ENCODE measurements at regions of chr22 and their contacts with region 1.

Region 1: DNA sequence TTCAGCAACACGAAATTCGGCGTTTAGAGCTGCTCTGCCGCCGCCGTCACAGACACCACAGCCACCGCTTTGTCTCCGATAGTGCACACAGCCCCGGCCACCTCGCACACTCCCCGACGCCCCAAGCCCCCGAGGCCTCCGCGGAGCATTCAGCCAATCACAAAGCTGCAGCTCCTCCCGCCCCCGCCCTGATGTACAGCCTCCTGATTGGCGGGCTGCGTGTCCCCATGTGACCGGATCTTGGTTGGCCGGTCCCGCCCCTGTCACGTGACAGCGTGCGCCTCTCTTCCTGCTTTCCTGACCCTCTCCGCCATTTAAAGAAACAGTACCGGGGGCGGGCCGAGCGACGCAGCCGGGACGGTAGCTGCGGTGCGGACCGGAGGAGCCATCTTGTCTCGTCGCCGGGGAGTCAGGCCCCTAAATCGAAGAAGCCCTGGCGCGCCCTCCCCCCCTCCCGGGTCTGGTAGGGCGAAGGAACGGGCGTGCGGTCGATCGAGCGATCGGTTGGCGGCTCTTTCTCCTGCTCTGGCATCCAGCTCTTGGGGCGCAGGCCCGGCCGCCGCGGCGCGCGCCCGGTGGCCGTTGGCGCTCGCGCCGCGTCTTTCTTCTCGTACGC is at the start of gene TUG1:
- DNase-seq: peak; percentile 99
- ATAC-seq: peak; percentile 93
- H3K4me3 Mint-ChIP-seq: peak within 1 kb of the TSS; percentile 86
- H3K27ac Mint-ChIP-seq: peak within 1 kb of the TSS; percentile 97
- H3K4me1 Mint-ChIP-seq: peaks cover 54% of the 10 kb centered on the region
- H3K27me3 Mint-ChIP-seq: no peaks in the 10 kb centered on the region
- CTCF ChIP-seq: no peak
- total RNA-seq, gene TUG1: 45.2 to 45.7 TPM

Region 2: GRCh38 chr22:30880181-30880601 is 88.8 kb before region 1 on chr22:
- CTCF ChIA-PET with region 1: no interaction called
- POLR2A ChIA-PET with region 1: no interaction called
- intact Hi-C with region 1: no loop called
- DNase-seq: no peak
- ATAC-seq: no peak
- H3K4me3 Mint-ChIP-seq: no peak overlapping the region
- H3K27ac Mint-ChIP-seq: no peak overlapping the region
- H3K4me1 Mint-ChIP-seq: no peaks in the 10 kb centered on the region
- H3K27me3 Mint-ChIP-seq: no peaks in the 10 kb centered on the region
- CTCF ChIP-seq: no peak

Region 3: GRCh38 chr22:30940685-30941362 is 28.2 kb before region 1 on chr22:
- CTCF ChIA-PET with region 1: interaction called, 5 read pairs
- POLR2A ChIA-PET with region 1: interaction called, 14 read pairs
- intact Hi-C with region 1: no loop called
- DNase-seq: peak; percentile 71
- ATAC-seq: peak; percentile 70
- H3K4me3 Mint-ChIP-seq: peak overlapping the region; percentile 35
- H3K27ac Mint-ChIP-seq: peak overlapping the region; percentile 81
- H3K4me1 Mint-ChIP-seq: peaks cover 67% of the 10 kb centered on the region
- H3K27me3 Mint-ChIP-seq: no peaks in the 10 kb centered on the region
- CTCF ChIP-seq: no peak

Region 4: DNA sequence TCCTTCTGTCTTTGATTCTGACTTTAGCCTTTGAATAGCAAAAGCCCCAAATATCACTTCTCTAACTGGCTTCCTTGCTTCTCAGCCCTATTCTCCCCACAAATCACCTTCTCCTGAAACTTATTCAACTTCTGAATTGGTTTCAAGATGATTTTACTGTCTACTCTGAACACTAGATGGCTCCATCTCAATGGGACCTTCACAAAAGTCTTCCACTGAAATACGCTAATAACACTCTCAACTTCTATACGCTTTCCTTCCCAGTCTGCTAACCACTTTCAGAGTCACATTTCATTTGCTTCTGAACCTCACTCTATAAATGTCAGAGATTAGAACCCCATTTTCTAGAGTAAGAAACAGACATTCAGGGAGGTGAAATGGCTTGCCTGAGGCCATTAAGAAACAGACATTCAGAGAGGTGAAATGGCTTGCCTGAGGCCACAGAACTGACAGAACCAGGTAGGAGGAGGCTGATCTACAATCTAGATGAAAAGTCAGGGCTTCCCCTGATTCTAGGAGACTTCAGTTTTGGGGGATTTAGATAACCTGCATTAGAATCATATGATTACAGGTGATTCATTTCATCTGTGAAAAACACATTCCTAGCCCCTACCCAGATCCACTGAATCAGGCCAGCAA is 21.1 kb before region 1 on chr22:
- CTCF ChIA-PET with region 1: interaction called, 11 read pairs
- POLR2A ChIA-PET with region 1: interaction called, 4 read pairs
- intact Hi-C with region 1: no loop called
- DNase-seq: no peak
- ATAC-seq: peak; percentile 61
- H3K4me3 Mint-ChIP-seq: no peak overlapping the region
- H3K27ac Mint-ChIP-seq: no peak overlapping the region
- H3K4me1 Mint-ChIP-seq: peaks cover 44% of the 10 kb centered on the region
- H3K27me3 Mint-ChIP-seq: no peaks in the 10 kb centered on the region
- CTCF ChIP-seq: peak; percentile 38